ENCODE measurements at regions of chr19 and their contacts with region 1.

Region 1: GRCh38 chr19:6862673-6863078 is 24.7 kb upstream of the ADGRE1 start:
- DNase-seq: peak; percentile 80 to 91 (median 90)
- ATAC-seq: peak; percentile 90 to 95
- H3K4me3 ChIP-seq: peak overlapping the region; percentile 27
- H3K27ac ChIP-seq: no peak overlapping the region
- H3K4me1 ChIP-seq: no peaks in the 10 kb centered on the region
- H3K27me3 ChIP-seq: no peaks in the 10 kb centered on the region

Region 2: DNA sequence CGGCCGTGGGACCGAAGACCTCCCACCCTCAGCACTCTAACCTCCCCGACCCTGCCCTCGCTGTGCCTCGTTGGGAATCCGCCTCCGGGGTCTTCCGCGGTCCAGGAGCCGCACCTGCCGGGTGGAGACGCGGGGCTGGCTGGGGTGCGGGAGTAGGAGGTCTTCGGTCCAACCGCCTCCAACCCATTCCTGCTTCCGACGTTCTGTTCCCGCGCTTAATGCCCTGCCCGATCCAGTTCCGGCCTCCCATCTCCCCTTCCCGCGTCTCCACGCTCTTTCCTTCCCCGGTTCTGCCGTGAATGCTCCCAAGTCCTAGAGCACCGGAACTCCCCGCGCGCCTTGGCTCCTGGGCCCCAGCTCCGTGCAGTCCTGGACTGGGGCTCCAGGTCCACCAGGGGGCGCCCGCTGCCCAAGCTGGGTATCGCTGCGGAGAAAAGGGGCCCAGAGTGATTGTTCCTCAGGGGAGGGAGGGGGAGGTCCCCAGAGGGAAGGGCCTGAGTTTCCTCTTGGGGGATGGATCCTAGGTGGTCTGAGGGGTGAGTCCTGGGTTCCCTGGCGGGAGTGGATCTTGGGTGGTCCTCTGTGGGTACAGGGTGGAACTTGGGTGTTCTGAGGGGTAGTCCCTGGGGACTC is 345.9 kb before region 1 on chr19:
- intact Hi-C with region 1: loop called in 3 of 4 experiments (anchors 5 kb)
- DNase-seq: peak; percentile 93 to 97 (median 96)
- ATAC-seq: peak; percentile 92 to 93
- H3K4me3 ChIP-seq: peak overlapping the region; percentile 35
- H3K27ac ChIP-seq: no peak overlapping the region
- H3K4me1 ChIP-seq: no peaks in the 10 kb centered on the region
- H3K27me3 ChIP-seq: no peaks in the 10 kb centered on the region

Region 3: DNA sequence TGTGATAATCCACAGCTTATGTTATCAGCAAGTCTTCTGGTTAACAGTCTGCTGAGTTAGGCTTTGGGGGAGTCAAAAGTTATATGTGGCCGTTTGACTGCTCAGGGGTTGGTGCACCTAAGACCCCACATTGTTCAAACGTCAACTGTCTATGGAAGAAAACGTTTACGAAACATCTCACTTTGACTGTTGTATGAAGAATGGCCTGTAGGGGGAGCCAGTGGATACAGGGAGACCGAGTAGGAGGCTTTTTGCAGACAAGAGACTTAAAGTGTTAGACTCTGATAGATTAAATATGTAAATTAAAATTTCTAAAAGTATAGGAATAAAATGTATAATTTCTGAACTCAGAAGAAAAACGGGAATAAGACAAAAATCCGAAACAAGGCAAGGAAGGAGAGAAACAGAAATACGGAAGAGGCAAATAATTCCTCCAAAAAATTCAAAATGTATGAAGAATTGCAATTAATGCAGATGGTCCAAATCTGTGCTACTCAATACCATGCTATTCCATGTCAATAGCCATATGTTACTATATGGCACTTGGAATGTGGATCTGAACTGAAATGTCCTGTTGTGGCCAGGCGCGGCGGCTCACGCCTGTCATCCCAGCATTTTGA is 230.6 kb before region 1 on chr19:
- intact Hi-C with region 1: loop called (anchors 2 to 10 kb)
- DNase-seq: peak in 1 of 3 donors; percentile 24
- ATAC-seq: peak in 1 of 2 donors; percentile 37
- H3K4me3 ChIP-seq: no peak overlapping the region
- H3K27ac ChIP-seq: no peak overlapping the region
- H3K4me1 ChIP-seq: no peaks in the 10 kb centered on the region
- H3K27me3 ChIP-seq: no peaks in the 10 kb centered on the region

Region 4: DNA sequence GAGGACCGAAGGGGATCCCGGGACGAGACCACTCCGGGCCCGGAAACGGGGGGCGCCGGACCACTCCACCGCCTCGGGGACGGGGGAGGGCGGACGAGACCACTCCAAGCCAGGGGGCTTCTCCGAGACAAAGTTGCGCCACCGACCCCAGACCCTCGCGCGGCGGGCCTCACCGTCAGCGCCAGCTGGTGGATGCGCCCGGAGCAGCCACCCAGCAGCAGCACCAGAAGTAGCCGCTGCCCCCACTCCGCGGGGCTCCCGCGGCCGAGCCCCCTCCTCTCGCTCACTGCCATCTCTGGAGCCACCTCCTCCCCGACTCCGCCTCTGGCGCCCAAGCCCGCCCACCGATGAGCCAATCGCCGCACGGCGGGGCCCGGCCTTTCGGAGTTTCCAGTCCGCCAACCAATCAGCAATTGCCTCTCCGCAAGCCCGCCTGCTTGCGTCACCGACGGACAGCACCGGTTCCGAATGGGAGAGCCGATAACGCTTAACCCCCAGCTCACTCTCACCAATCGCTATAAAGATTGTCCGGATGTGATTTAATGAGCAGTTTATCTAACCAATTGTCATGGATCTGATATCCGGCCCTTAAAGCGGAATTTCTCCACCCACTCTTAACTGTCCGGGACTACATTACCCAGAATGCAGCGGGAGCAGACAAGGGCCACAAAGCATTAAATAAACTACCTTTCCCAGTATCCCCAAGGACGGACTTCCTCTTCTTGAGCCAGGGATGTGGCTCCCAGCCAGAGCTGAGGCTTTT is 125.2 kb before region 1 on chr19 and contains the start of gene GPR108:
- intact Hi-C with region 1: loop called in 2 of 4 experiments (anchors 2 to 10 kb)
- DNase-seq: peak; percentile 100
- ATAC-seq: peak; percentile 89
- H3K4me3 ChIP-seq: peak within 1 kb of the TSS; percentile 61
- H3K27ac ChIP-seq: peak within 1 kb of the TSS; percentile 99
- H3K4me1 ChIP-seq: peaks cover 9% of the 10 kb centered on the region
- H3K27me3 ChIP-seq: no peaks in the 10 kb centered on the region
- total RNA-seq, gene GPR108: 28.2 to 38.4 (median 33.0) TPM

Measured in right cardiac atrium (tissue), 5 donors.